ENCODE measurements at regions of chr10 and their contacts with region 1.

Region 1: GRCh38 chr10:21495752-21496342 is 29.6 kb downstream of the SKIDA1 start:
- DNase-seq: peak; percentile 95
- ATAC-seq: peak; percentile 83
- H3K4me3 ChIP-seq: peak overlapping the region; percentile 82 to 95 (median 83)
- H3K27ac ChIP-seq: peak overlapping the region; percentile 98
- H3K4me1 ChIP-seq: peaks cover 38% of the 10 kb centered on the region
- H3K27me3 ChIP-seq: no peaks in the 10 kb centered on the region; a peak in 1 of 5 replicates
- CTCF ChIP-seq: peak; percentile 96
- EP300 ChIP-seq: peak; percentile 86 to 92
- POLR2A ChIP-seq: peak in 1 of 2 experiments; percentile 98; a peak in 2 of 4 replicates
- RAD21 ChIP-seq: peak; percentile 100

Region 2: GRCh38 chr10:21510241-21511074 is 14.6 kb after region 1 on chr10:
- CTCF ChIA-PET with region 1: interaction called, 4 read pairs
- POLR2A ChIA-PET with region 1: interaction called, 129 read pairs
- in situ Hi-C with region 1: no loop called
- intact Hi-C with region 1: no loop called
- DNase-seq: no peak
- ATAC-seq: no peak
- H3K4me3 ChIP-seq: 0 out of 6 replicates have a peak overlapping the region, but pooled peaks of 1 of the 3 experiments have one; percentile 4
- H3K27ac ChIP-seq: peak overlapping the region; percentile 39
- H3K4me1 ChIP-seq: peaks cover 93% of the 10 kb centered on the region
- H3K27me3 ChIP-seq: no peaks in the 10 kb centered on the region
- CTCF ChIP-seq: no peak
- EP300 ChIP-seq: peak in 1 of 2 experiments; percentile 15; a peak in 1 of 4 replicates
- POLR2A ChIP-seq: no peak
- RAD21 ChIP-seq: no peak

Region 3: DNA sequence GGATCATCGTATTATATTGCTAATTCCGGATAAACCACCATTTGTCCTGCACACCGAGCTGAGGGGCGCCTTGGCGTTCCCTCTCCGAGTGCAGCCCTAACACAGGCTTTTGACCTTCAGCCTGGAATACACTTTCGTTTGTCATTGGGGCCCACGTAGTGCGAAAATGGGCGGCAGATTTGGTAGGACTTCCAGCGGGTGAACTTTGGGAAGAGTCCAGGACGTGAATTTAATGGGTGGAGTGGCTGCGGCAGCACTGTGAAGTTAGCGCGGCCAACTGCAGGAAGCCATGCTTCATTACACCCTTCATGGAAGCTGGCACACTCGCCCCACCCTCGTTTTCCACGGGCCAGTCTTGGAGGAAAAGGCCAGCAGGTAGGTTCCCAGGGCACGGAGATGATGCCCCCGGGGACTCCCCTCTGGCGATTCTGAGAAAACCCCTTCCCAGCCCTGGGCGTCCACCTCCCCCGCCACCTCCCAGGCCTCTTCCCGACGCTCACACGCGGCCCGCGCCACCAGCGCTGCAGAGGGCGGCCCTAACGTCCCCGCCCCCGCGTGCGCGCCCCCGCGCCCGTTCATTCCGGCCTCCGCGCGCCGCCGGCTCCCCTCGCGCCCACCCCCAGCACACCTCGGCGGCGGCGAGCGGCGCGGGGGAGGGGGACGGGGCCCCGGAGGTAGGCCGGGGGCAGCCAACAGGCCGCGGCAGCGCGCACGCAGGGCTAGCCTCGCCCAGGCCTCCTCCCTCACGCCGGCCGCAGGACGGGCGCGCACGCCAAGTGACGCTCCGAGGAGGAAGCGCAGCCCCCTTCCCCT is 37.8 kb after region 1 on chr10 and contains the start of gene MLLT10:
- CTCF ChIA-PET with region 1: interaction called, 7 read pairs
- POLR2A ChIA-PET with region 1: interaction called, 40 read pairs
- in situ Hi-C with region 1: no loop called
- intact Hi-C with region 1: loop called (anchors 1 kb)
- DNase-seq: peak; percentile 94
- ATAC-seq: peak; percentile 85
- H3K4me3 ChIP-seq: peak within 1 kb of the TSS; percentile 76 to 84 (median 81)
- H3K27ac ChIP-seq: peak within 1 kb of the TSS; percentile 97
- H3K4me1 ChIP-seq: peaks cover 38% of the 10 kb centered on the region
- H3K27me3 ChIP-seq: no peaks in the 10 kb centered on the region; a peak in 1 of 5 replicates
- CTCF ChIP-seq: peak; percentile 33
- EP300 ChIP-seq: peak; percentile 17 to 60; a peak in 1 of 4 replicates
- POLR2A ChIP-seq: peak in 1 of 2 experiments; percentile 91; a peak in 2 of 4 replicates
- RAD21 ChIP-seq: peak; percentile 69; the same call in 1 of the 2 replicates
- total RNA-seq, gene MLLT10: 39.3 and 51.3 TPM in 2 replicates

Region 4: DNA sequence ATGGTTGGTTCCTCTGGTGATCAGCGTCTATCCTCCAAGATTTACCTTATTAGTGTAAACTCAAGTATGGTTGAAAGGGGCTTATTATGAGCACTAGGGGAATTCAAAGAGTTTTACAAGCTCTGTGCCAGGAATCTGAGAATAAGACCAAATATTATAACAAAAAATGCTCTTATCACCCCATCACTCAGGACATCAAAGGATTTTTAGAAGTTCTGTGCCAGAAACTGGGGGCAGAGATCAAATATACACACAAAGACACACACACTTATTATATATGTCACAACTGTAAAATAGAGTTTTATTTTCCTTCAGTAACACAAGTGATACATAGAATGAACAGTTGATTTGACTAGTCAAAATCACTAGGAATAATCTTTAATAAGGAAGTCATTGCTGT is 127.4 kb after region 1 on chr10:
- CTCF ChIA-PET with region 1: interaction called, 4 read pairs
- POLR2A ChIA-PET with region 1: interaction called, 8 read pairs
- in situ Hi-C with region 1: no loop called
- intact Hi-C with region 1: loop called (anchors 2 kb)
- DNase-seq: peak; percentile 45
- ATAC-seq: no peak
- H3K4me3 ChIP-seq: no peak overlapping the region
- H3K27ac ChIP-seq: no peak overlapping the region
- H3K4me1 ChIP-seq: peaks cover 34% of the 10 kb centered on the region
- H3K27me3 ChIP-seq: no peaks in the 10 kb centered on the region
- CTCF ChIP-seq: no peak
- EP300 ChIP-seq: no peak
- POLR2A ChIP-seq: no peak
- RAD21 ChIP-seq: no peak

Region 5: DNA sequence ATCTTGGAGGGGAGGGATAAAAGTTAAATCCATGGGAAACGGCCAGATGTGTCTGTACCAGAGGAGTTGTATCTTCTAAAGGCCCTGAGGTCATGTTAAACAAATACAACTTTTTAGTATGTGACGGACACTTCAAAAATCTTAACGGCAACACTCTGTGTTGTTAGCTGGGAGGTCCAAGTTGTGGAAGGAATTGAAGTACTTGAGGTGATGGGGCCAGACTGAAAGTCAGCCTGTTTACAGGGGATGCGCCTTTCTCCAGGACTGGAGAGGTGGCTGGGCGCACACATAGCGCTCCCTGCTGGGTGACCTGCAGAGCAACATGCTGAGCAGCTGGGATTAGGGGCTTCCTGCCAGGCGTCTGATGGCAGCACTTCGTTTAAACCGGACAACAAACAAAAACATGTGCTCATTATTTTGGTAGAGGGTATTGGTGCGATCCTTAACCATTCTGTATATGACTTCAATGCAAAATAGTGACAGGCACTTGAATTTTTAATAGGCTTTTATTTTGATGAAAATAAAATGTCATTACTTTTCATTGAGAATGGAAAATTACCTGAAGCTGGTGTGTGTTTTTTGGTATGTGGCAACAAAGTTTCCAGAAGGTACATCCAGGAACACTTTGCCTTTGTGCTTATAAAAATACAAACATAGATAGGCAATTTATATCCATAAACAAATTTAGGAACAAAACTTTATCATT is 236.4 kb after region 1 on chr10:
- CTCF ChIA-PET with region 1: interaction called, 13 read pairs
- POLR2A ChIA-PET with region 1: interaction called, 5 read pairs
- in situ Hi-C with region 1: no loop called
- intact Hi-C with region 1: loop called (anchors 2 kb)
- DNase-seq: peak; percentile 50
- ATAC-seq: peak; percentile 94
- H3K4me3 ChIP-seq: no peak overlapping the region
- H3K27ac ChIP-seq: no peak overlapping the region
- H3K4me1 ChIP-seq: peaks cover 23% of the 10 kb centered on the region
- H3K27me3 ChIP-seq: no peaks in the 10 kb centered on the region
- CTCF ChIP-seq: peak; percentile 86
- EP300 ChIP-seq: no peak
- POLR2A ChIP-seq: no peak
- RAD21 ChIP-seq: peak; percentile 85

Region 6: GRCh38 chr10:22067099-22067498 is 571.3 kb after region 1 on chr10:
- CTCF ChIA-PET with region 1: no interaction called
- POLR2A ChIA-PET with region 1: no interaction called
- in situ Hi-C with region 1: no loop called
- intact Hi-C with region 1: no loop called
- DNase-seq: no peak
- ATAC-seq: no peak
- H3K4me3 ChIP-seq: no peak overlapping the region
- H3K27ac ChIP-seq: no peak overlapping the region
- H3K4me1 ChIP-seq: no peaks in the 10 kb centered on the region
- H3K27me3 ChIP-seq: no peaks in the 10 kb centered on the region
- CTCF ChIP-seq: no peak
- EP300 ChIP-seq: no peak
- POLR2A ChIP-seq: no peak
- RAD21 ChIP-seq: no peak